Naive thymus-derived CD4-positive, alpha-beta T cell (primary cell): ENCODE measurements at regions of chr4 and their contacts with region 1.

Region 1: GRCh38 chr4:39410415-39410814 is 3.7 kb downstream of the KLB start:
- DNase-seq: no peak
- ATAC-seq: no peak
- H3K4me3 ChIP-seq: no peak overlapping the region
- H3K4me3 Mint-ChIP-seq: no peak overlapping the region
- H3K27ac ChIP-seq: no peak overlapping the region
- H3K27ac Mint-ChIP-seq: no peak overlapping the region
- H3K4me1 ChIP-seq: no peaks in the 10 kb centered on the region
- H3K4me1 Mint-ChIP-seq: no peaks in the 10 kb centered on the region
- H3K27me3 ChIP-seq: no peaks in the 10 kb centered on the region
- H3K27me3 Mint-ChIP-seq: peaks cover 0 to 10% (median 0%) of the 10 kb centered on the region in 5 donors

Region 2: GRCh38 chr4:38759113-38759789 is 651.2 kb before region 1 on chr4:
- CTCF ChIA-PET with region 1: interaction called, 3 read pairs
- POLR2A ChIA-PET with region 1: no interaction called
- intact Hi-C with region 1: loop called in 1 of 2 experiments (anchors 5 kb)
- DNase-seq: peak; percentile 29 to 66 (median 58)
- ATAC-seq: peak; percentile 64
- H3K4me3 ChIP-seq: no peak overlapping the region
- H3K4me3 Mint-ChIP-seq: no peak overlapping the region
- H3K27ac ChIP-seq: no peak overlapping the region
- H3K27ac Mint-ChIP-seq: peak overlapping the region in 2 of 9 donors; percentile 10 to 41
- H3K4me1 ChIP-seq: peaks cover 0 to 5% of the 10 kb centered on the region in 2 donors
- H3K4me1 Mint-ChIP-seq: peaks cover 8 to 31% (median 19%) of the 10 kb centered on the region in 7 donors
- H3K27me3 ChIP-seq: no peaks in the 10 kb centered on the region
- H3K27me3 Mint-ChIP-seq: no peaks in the 10 kb centered on the region

Region 3: DNA sequence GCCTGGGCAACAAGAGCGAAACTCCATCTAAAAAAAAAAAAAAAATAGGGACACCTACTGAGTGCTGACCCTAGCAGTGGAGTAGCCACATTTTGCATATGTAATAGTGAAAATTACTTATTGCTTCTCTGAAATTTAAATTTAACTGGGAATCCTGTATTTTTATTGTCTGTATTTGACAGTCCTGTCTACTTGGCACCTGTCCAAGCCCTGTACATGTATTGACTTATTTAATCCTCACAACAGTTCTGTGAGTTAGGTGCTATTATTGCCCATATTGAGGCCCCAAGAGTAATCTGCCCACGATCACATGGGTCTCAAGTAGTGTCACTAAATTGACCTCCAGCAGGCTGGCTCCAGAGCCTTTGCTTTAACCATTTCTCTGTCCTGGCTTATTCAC is 146.5 kb before region 1 on chr4:
- CTCF ChIA-PET with region 1: no interaction called
- POLR2A ChIA-PET with region 1: no interaction called
- intact Hi-C with region 1: no loop called
- DNase-seq: no peak
- ATAC-seq: no peak
- H3K4me3 ChIP-seq: no peak overlapping the region
- H3K4me3 Mint-ChIP-seq: no peak overlapping the region
- H3K27ac ChIP-seq: no peak overlapping the region
- H3K27ac Mint-ChIP-seq: no peak overlapping the region
- H3K4me1 ChIP-seq: no peaks in the 10 kb centered on the region
- H3K4me1 Mint-ChIP-seq: peaks cover 0 to 1% (median 0%) of the 10 kb centered on the region in 7 donors
- H3K27me3 ChIP-seq: no peaks in the 10 kb centered on the region
- H3K27me3 Mint-ChIP-seq: no peaks in the 10 kb centered on the region

Region 4: GRCh38 chr4:39732728-39733127 is 322.3 kb after region 1 on chr4:
- CTCF ChIA-PET with region 1: no interaction called
- POLR2A ChIA-PET with region 1: no interaction called
- intact Hi-C with region 1: no loop called
- DNase-seq: no peak
- ATAC-seq: no peak
- H3K4me3 ChIP-seq: no peak overlapping the region
- H3K4me3 Mint-ChIP-seq: no peak overlapping the region
- H3K27ac ChIP-seq: no peak overlapping the region
- H3K27ac Mint-ChIP-seq: peak overlapping the region in 1 of 9 donors; percentile 82
- H3K4me1 ChIP-seq: peaks cover 0 to 5% of the 10 kb centered on the region in 2 donors
- H3K4me1 Mint-ChIP-seq: peaks cover 14 to 37% (median 17%) of the 10 kb centered on the region in 7 donors
- H3K27me3 ChIP-seq: no peaks in the 10 kb centered on the region
- H3K27me3 Mint-ChIP-seq: no peaks in the 10 kb centered on the region